IMR-90 (cell line): ENCODE measurements at regions of chr2 and their contacts with region 1.

Region 1: GRCh38 chr2:179751163-179751809 is 110.1 kb downstream of the ZNF385B start:
- DNase-seq: peak; percentile 47
- ATAC-seq: peak; percentile 63; the same call in 1 of the 2 replicates
- H3K4me3 ChIP-seq: no peak overlapping the region
- H3K27ac ChIP-seq: no peak overlapping the region
- H3K4me1 ChIP-seq: no peaks in the 10 kb centered on the region
- H3K27me3 ChIP-seq: no peaks in the 10 kb centered on the region
- CTCF ChIP-seq: peak; percentile 81
- POLR2A ChIP-seq: no peak
- RAD21 ChIP-seq: peak; percentile 90

Region 2: DNA sequence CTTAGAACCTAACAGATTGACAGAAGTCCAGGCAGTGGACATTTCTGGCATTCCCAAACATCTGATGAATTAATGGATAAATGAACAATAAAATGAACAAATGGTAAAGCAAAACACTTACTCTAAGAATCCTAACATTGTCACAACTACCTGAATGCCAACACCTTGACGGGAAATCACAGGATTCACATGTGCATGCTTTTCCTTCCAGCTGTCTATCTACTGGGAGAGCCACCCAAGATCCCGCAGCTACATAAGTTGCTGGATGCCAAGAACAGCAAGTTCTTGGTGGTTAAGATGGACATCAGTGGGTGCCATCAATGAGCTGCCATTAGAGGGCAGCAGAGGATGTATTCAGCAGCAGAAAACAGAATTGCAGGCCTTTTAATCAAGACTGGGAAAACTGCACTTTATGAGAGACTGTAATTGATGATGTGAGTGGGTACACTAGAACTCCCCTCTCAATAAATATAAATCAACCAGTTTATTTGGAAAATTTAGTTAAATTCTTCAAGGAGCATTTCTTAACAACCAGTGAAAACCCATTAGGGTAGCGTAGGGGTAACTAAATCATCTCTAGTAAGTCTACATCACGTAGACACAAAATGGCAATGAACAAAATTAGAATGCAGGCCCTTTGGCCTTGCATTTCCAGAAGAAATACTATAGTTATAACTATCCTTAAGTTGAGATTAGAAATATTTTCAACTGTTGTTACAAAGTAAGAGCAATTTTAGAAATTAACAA is 532.3 kb before region 1 on chr2:
- CTCF ChIA-PET with region 1: no interaction called
- POLR2A ChIA-PET with region 1: no interaction called
- dilution Hi-C with region 1: no loop called
- in situ Hi-C with region 1: loop called (anchors 10 kb)
- intact Hi-C with region 1: loop called (anchors 1 kb)
- DNase-seq: peak; percentile 87
- ATAC-seq: peak; percentile 93
- H3K4me3 ChIP-seq: no peak overlapping the region
- H3K27ac ChIP-seq: no peak overlapping the region
- H3K4me1 ChIP-seq: no peaks in the 10 kb centered on the region
- H3K27me3 ChIP-seq: no peaks in the 10 kb centered on the region
- CTCF ChIP-seq: peak; percentile 88
- POLR2A ChIP-seq: no peak
- RAD21 ChIP-seq: peak; percentile 87

Region 3: DNA sequence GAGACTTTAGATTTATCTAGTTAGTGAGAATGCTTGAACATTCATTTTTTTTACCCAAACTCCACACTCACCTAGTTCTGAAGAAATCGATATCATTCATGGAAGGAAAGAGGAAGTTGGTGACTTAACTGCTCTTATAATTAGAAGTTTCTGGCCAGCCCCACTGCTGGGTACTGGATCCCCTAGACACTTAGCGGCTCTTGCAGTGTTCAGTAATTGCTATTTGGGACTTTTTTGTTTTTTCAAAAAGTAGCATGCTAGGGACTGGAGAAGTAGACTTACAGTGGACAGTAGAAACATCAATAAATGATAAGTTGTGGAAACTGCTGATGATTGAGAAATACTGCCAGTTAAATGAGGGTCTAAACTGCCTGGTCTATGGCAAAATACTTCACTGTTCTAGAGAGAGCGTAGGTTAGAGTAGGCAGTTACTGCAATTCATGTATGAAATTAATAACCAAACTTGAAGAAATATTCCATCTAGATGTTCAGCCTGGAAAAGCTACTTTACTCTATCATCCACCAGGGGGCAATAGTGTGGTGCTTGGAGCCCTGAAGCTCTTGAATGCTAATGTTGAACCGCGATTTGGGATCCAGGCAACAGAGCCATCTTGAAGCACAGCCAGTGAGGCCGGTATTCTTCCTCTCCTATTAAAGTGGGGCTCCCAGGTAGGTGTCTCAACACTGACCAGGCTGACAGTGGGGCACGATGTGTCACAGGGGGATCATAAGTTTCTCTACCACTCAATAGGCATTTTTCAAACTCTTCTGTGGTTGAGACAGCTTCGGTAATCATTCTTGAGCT is 340.5 kb before region 1 on chr2:
- CTCF ChIA-PET with region 1: no interaction called
- POLR2A ChIA-PET with region 1: no interaction called
- dilution Hi-C with region 1: no loop called
- in situ Hi-C with region 1: no loop called
- intact Hi-C with region 1: loop called (anchors 1 kb)
- DNase-seq: peak; percentile 65
- ATAC-seq: peak; percentile 88
- H3K4me3 ChIP-seq: no peak overlapping the region
- H3K27ac ChIP-seq: no peak overlapping the region
- H3K4me1 ChIP-seq: 0 out of 2 replicates have a peak, but pooled peaks cover 2% of the 10 kb centered on the region
- H3K27me3 ChIP-seq: no peaks in the 10 kb centered on the region; the same call in 1 of the 2 replicates
- CTCF ChIP-seq: peak; percentile 67
- POLR2A ChIP-seq: no peak
- RAD21 ChIP-seq: peak; percentile 71

Region 4: GRCh38 chr2:179612108-179612507 is 139.2 kb before region 1 on chr2:
- CTCF ChIA-PET with region 1: no interaction called
- POLR2A ChIA-PET with region 1: no interaction called
- dilution Hi-C with region 1: no loop called
- in situ Hi-C with region 1: no loop called
- intact Hi-C with region 1: loop called (anchors 5 kb)
- DNase-seq: peak; percentile 75
- ATAC-seq: peak; percentile 84
- H3K4me3 ChIP-seq: no peak overlapping the region
- H3K27ac ChIP-seq: no peak overlapping the region
- H3K4me1 ChIP-seq: peaks cover 17% of the 10 kb centered on the region
- H3K27me3 ChIP-seq: no peaks in the 10 kb centered on the region
- CTCF ChIP-seq: no peak
- POLR2A ChIP-seq: no peak
- RAD21 ChIP-seq: no peak